ENCODE measurements at regions of chr9 and their contacts with region 1.

Region 1: DNA sequence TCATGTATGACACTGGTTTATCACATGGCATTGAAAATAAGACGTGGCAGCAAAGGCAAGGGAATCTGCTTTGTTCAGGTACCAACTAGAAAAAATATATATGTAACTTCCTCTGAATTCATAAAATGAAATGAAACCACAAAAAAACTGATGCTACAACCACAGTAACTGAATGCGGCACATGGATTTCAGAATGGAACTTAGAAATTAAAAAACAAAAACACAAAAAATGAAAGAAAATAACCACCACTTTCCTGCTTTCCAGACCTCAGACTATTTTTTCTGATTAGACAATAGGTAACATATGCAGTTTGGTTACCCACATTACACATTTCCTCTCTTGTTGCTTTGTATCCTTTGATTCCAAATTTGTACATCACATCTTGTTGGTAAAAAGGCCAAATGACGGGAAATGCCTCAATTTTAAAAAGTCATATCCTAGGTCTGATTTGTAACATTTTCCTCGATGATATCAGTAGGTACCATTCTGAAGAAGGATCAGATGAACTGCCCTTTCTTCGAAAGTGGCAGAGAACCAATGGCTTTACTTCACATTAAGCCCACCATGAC is 18.1 kb upstream of the PDCL start:
- DNase-seq: no peak
- ATAC-seq: no peak
- H3K4me3 ChIP-seq: no peak overlapping the region
- H3K27ac ChIP-seq: no peak overlapping the region
- H3K4me1 ChIP-seq: no peaks in the 10 kb centered on the region
- H3K27me3 ChIP-seq: no peaks in the 10 kb centered on the region
- CTCF ChIP-seq: no peak

Region 2: GRCh38 chr9:122888480-122888879 is 42.0 kb after region 1 on chr9:
- intact Hi-C with region 1: loop called in 1 of 2 experiments (anchors 5 kb)
- DNase-seq: no peak
- ATAC-seq: no peak
- H3K4me3 ChIP-seq: no peak overlapping the region
- H3K27ac ChIP-seq: no peak overlapping the region
- H3K4me1 ChIP-seq: no peaks in the 10 kb centered on the region
- H3K27me3 ChIP-seq: no peaks in the 10 kb centered on the region
- CTCF ChIP-seq: no peak

Measured in psoas muscle (tissue), 8 donors.